Body of pancreas (tissue), 4 donors: ENCODE measurements at regions of chr6 and their contacts with region 1.

Region 1: DNA sequence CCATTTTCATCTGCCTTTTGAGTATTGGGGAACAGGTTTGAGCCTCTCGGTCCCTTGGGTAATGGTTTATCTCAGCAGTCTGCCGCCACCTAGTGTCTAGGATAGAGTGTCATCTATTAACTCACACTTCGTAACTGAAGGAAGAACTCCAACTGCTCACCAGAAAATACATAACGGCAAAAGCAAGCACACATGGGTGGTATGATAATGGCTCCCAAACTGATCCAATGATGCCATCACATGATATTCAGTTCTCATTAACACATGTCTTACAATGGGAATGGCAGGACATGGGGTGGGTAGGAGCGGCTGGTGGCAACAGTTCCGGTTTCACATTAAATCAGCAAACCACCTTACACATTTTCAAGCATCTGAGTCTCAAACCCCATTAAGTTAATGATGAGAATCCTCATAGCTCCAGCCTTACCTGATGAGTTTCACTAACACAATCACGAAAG is 110.7 kb upstream of the PHACTR1 start:
- DNase-seq: peak; percentile 55 to 72 (median 67)
- ATAC-seq: peak; percentile 84
- H3K4me3 ChIP-seq: no peak overlapping the region
- H3K27ac ChIP-seq: no peak overlapping the region
- H3K4me1 ChIP-seq: no peaks in the 10 kb centered on the region
- H3K27me3 ChIP-seq: no peaks in the 10 kb centered on the region
- CTCF ChIP-seq: peak; percentile 53 to 84 (median 76)
- POLR2A ChIP-seq: no peak

Region 2: DNA sequence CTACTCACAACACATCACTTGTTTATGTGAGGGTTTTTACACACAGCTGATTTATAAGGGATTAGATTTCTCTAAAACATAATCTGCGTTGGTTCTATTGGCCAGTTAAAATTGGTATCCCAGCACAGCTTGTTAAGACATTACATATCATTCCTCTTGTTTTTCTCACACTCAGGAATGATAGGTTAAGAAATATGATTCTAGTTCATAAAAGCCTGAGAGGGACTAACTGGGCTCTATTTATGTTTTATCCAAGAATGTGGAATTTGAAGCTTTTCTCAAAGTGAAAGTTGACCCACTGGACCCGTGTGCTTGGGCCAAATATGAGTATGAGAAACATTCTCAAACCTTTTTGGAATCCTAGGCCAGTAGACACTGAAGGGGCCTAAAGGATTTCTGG is 951.0 kb before region 1 on chr6:
- intact Hi-C with region 1: loop called (anchors 2 kb)
- DNase-seq: no peak
- ATAC-seq: no peak
- H3K4me3 ChIP-seq: no peak overlapping the region
- H3K27ac ChIP-seq: no peak overlapping the region
- H3K4me1 ChIP-seq: peaks cover 10% of the 10 kb centered on the region
- H3K27me3 ChIP-seq: no peaks in the 10 kb centered on the region
- CTCF ChIP-seq: no peak
- POLR2A ChIP-seq: no peak

Region 3: DNA sequence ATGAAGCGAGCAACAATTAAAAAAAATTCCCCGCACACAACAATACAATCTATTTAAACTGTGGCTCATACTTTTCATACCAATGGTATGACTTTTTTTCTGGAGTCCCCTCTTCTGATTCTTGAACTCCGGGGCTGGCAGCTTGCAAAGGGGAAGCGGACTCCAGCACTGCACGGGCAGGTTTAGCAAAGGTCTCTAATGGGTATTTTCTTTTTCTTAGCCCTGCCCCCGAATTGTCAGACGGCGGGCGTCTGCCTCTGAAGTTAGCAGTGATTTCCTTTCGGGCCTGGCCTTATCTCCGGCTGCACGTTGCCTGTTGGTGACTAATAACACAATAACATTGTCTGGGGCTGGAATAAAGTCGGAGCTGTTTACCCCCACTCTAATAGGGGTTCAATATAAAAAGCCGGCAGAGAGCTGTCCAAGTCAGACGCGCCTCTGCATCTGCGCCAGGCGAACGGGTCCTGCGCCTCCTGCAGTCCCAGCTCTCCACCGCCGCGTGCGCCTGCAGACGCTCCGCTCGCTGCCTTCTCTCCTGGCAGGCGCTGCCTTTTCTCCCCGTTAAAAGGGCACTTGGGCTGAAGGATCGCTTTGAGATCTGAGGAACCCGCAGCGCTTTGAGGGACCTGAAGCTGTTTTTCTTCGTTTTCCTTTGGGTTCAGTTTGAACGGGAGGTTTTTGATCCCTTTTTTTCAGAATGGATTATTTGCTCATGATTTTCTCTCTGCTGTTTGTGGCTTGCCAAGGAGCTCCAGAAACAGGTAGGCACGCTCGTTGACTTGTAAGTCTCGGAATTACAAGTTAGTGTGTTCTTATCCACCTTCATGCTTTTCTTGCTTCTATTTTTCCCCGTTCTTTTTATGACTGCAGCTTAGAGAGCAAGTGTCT is 315.7 kb before region 1 on chr6 and contains the start of gene EDN1:
- intact Hi-C with region 1: loop called (anchors 10 kb)
- DNase-seq: peak; percentile 76 to 87 (median 82)
- ATAC-seq: peak; percentile 74
- H3K4me3 ChIP-seq: peak within 1 kb of the TSS in 1 of 2 donors; percentile 31
- H3K27ac ChIP-seq: peak within 1 kb of the TSS; percentile 66 to 81 (median 74)
- H3K4me1 ChIP-seq: peaks cover 58% of the 10 kb centered on the region
- H3K27me3 ChIP-seq: no peaks in the 10 kb centered on the region
- CTCF ChIP-seq: peak in 6 of 7 experiments; percentile 40 to 71 (median 58)
- POLR2A ChIP-seq: peak; percentile 58 to 79 (median 78)
- total RNA-seq, gene EDN1: 0.66 to 19.7 TPM

Region 4: DNA sequence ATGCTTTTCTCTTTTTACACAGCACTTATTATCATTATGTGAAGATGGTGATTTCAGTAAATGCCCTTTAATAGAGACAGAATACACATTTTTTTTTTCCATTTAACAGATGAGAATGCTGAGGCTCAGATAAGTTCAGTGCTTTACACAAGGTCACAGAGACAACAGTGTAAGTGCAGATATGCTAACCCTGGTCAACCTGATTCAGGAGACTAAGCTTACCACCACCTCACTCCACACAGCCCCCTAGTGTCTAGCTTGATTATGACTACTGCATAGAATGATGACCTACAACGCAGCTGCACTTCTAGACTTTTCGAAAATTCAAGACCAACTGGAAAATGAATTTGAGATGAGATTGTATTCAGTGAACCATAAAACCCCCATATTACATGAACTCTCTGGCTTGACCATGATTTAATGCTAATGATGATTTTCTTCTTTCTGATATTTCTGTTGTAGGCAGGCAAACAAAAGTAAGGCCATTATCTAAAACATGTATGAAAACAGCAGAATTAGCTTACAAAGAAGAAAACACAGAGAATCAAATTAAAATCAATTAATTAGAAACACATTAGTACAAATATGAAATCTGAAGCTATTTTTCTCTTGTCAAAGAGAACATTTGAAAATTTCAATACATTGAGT is 101.5 kb before region 1 on chr6:
- intact Hi-C with region 1: no loop called
- DNase-seq: peak; percentile 40 to 47 (median 44)
- ATAC-seq: peak; percentile 86
- H3K4me3 ChIP-seq: no peak overlapping the region
- H3K27ac ChIP-seq: no peak overlapping the region
- H3K4me1 ChIP-seq: no peaks in the 10 kb centered on the region
- H3K27me3 ChIP-seq: no peaks in the 10 kb centered on the region
- CTCF ChIP-seq: peak in 6 of 7 experiments; percentile 38 to 80 (median 68)
- POLR2A ChIP-seq: no peak

Region 5: GRCh38 chr6:12785301-12785700 is 179.4 kb after region 1 on chr6:
- intact Hi-C with region 1: no loop called
- DNase-seq: no peak
- ATAC-seq: no peak
- H3K4me3 ChIP-seq: no peak overlapping the region
- H3K27ac ChIP-seq: no peak overlapping the region
- H3K4me1 ChIP-seq: no peaks in the 10 kb centered on the region
- H3K27me3 ChIP-seq: no peaks in the 10 kb centered on the region
- CTCF ChIP-seq: no peak
- POLR2A ChIP-seq: no peak